PC-9 (cell line): ENCODE measurements at regions of chr4 and their contacts with region 1.

Region 1: DNA sequence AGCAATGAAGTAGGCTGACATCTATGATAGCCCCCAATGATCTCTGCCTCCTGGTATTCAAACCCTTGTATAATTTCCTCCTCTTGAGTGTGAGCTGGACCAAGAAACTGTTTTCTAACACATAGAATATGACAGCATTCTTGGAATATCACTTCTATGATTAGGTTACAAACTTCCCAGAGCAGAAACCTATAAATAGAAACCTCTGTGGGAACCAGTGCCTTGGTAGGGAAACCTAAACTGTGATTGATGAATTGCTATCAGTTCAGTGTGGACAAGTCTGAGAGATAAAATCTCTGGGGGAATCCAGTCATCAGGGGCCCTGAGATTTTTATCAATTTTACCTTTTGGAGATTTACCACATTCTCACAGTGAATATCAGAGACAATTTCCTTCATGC is 756.5 kb upstream of the AGA start:
- DNase-seq: peak in 1 of 2 experiments; percentile 38
- H3K4me3 ChIP-seq: no peak overlapping the region
- H3K27ac ChIP-seq: no peak overlapping the region
- H3K4me1 ChIP-seq: no peaks in the 10 kb centered on the region
- H3K27me3 ChIP-seq: no peaks in the 10 kb centered on the region
- CTCF ChIP-seq: no peak

Region 2: GRCh38 chr4:178165951-178166308 is 32.8 kb before region 1 on chr4:
- CTCF ChIA-PET with region 1: no interaction called
- POLR2A ChIA-PET with region 1: no interaction called
- intact Hi-C with region 1: loop called (anchors 1 kb)
- DNase-seq: peak; percentile 8 to 68
- H3K4me3 ChIP-seq: no peak overlapping the region
- H3K27ac ChIP-seq: 0 out of 2 replicates have a peak overlapping the region, but pooled peaks have one; percentile 23
- H3K4me1 ChIP-seq: peaks cover 8% of the 10 kb centered on the region; the same call in 1 of the 2 replicates
- H3K27me3 ChIP-seq: no peaks in the 10 kb centered on the region
- CTCF ChIP-seq: no peak

Region 3: DNA sequence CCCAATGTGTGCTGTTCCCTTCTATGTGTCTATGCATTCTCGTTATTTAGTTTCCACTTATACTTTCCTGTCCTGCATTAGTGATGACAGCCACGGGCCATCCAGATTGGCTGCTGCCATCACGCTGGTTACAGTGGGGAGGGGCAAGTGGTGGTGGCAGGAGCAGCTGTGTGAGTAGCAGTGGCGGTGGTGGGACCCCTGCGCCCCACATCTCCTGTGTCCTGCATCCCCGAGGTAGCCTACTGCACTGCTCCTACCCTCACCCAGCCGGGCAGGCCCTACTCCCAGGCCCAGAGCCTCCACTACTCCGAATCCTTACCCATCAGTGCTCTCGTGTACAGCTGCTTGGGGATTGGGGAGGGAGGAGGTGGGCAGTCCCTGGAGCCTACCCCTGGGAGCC is 42.2 kb after region 1 on chr4:
- CTCF ChIA-PET with region 1: no interaction called
- POLR2A ChIA-PET with region 1: no interaction called
- intact Hi-C with region 1: no loop called
- DNase-seq: no peak
- H3K4me3 ChIP-seq: no peak overlapping the region
- H3K27ac ChIP-seq: no peak overlapping the region
- H3K4me1 ChIP-seq: no peaks in the 10 kb centered on the region
- H3K27me3 ChIP-seq: no peaks in the 10 kb centered on the region
- CTCF ChIP-seq: no peak

Region 4: GRCh38 chr4:178356725-178357124 is 158.0 kb after region 1 on chr4:
- CTCF ChIA-PET with region 1: no interaction called
- POLR2A ChIA-PET with region 1: no interaction called
- intact Hi-C with region 1: no loop called
- DNase-seq: no peak
- H3K4me3 ChIP-seq: no peak overlapping the region
- H3K27ac ChIP-seq: no peak overlapping the region
- H3K4me1 ChIP-seq: no peaks in the 10 kb centered on the region
- H3K27me3 ChIP-seq: no peaks in the 10 kb centered on the region
- CTCF ChIP-seq: no peak

Region 5: GRCh38 chr4:178894126-178894525 is 695.4 kb after region 1 on chr4:
- CTCF ChIA-PET with region 1: no interaction called
- POLR2A ChIA-PET with region 1: no interaction called
- intact Hi-C with region 1: no loop called
- DNase-seq: no peak
- H3K4me3 ChIP-seq: no peak overlapping the region
- H3K27ac ChIP-seq: no peak overlapping the region
- H3K4me1 ChIP-seq: no peaks in the 10 kb centered on the region
- H3K27me3 ChIP-seq: no peaks in the 10 kb centered on the region
- CTCF ChIP-seq: no peak